Activated CD8-positive, alpha-beta T cell treated with anti-CD3 and anti-CD28 coated beads, Interleukin-2, amount 10 ng/mL, durations not matched to agents 7 days and 5 days (primary cell): ENCODE measurements at regions of chr1 and their contacts with region 1.

Region 1: DNA sequence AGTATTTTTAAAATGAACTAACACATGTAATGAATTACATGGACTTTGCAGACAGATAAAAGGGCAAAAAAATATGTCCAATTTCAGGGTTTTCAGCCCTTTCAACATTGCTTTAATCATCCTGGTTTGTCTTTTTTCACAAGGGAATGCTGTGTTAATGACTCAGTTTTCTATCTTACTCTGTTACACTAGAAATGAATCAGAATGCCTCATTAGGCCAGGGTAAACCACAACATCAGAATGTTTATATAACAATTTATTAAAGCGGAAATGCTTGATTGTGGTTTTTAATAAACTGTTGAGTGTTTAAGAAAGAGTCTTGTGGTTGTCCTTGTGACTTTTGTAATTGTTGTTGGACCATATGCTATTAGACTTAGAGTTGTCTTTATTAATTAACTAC is 13.5 kb downstream of the GORAB start:
- DNase-seq: no peak
- ATAC-seq: no peak
- H3K4me3 Mint-ChIP-seq: no peak overlapping the region
- H3K27ac Mint-ChIP-seq: no peak overlapping the region
- H3K4me1 Mint-ChIP-seq: no peaks in the 10 kb centered on the region
- H3K27me3 Mint-ChIP-seq: no peaks in the 10 kb centered on the region

Region 2: GRCh38 chr1:170531758-170532657 is 13.5 kb before region 1 on chr1 and contains the start of gene GORAB:
- CTCF ChIA-PET with region 1: interaction called, 3 read pairs
- POLR2A ChIA-PET with region 1: interaction called, 10 read pairs
- DNase-seq: peak; percentile 91
- ATAC-seq: peak; percentile 99
- H3K4me3 Mint-ChIP-seq: no peak within 1 kb of the TSS
- H3K27ac Mint-ChIP-seq: no peak within 1 kb of the TSS
- H3K4me1 Mint-ChIP-seq: peaks cover 9% of the 10 kb centered on the region
- H3K27me3 Mint-ChIP-seq: peaks cover 11% of the 10 kb centered on the region
- total RNA-seq, gene GORAB: 11.0 TPM

Region 3: GRCh38 chr1:170664828-170665612 is 119.5 kb after region 1 on chr1:
- CTCF ChIA-PET with region 1: no interaction called
- POLR2A ChIA-PET with region 1: no interaction called
- DNase-seq: no peak
- ATAC-seq: peak; percentile 36
- H3K4me3 Mint-ChIP-seq: no peak overlapping the region
- H3K27ac Mint-ChIP-seq: no peak overlapping the region
- H3K4me1 Mint-ChIP-seq: peaks cover 17% of the 10 kb centered on the region
- H3K27me3 Mint-ChIP-seq: peaks cover 86% of the 10 kb centered on the region